ENCODE measurements at regions of chr15 and their contacts with region 1.

Region 1: GRCh38 chr15:93030430-93031105 is 58.4 kb downstream of the RGMA start:
- DNase-seq: peak; percentile 90
- H3K4me3 ChIP-seq: no peak overlapping the region
- H3K27ac ChIP-seq: peak overlapping the region; percentile 84 to 91 (median 88)
- H3K4me1 ChIP-seq: peaks cover 0 to 75% (median 68%) of the 10 kb centered on the region in 4 donors
- H3K27me3 ChIP-seq: no peaks in the 10 kb centered on the region
- CTCF ChIP-seq: peak; percentile 83 to 92 (median 89)
- EP300 ChIP-seq: no peak
- POLR2A ChIP-seq: no peak

Region 2: GRCh38 chr15:93072411-93073394 is 42.1 kb after region 1 on chr15:
- intact Hi-C with region 1: loop called (anchors 2 kb)
- DNase-seq: peak; percentile 94
- H3K4me3 ChIP-seq: peak overlapping the region; percentile 85 to 99 (median 88)
- H3K27ac ChIP-seq: peak overlapping the region; percentile 96 to 98 (median 97)
- H3K4me1 ChIP-seq: peaks cover 0 to 77% (median 59%) of the 10 kb centered on the region in 4 donors
- H3K27me3 ChIP-seq: no peaks in the 10 kb centered on the region
- CTCF ChIP-seq: no peak
- EP300 ChIP-seq: no peak
- POLR2A ChIP-seq: peak; percentile 33 to 41

Region 3: DNA sequence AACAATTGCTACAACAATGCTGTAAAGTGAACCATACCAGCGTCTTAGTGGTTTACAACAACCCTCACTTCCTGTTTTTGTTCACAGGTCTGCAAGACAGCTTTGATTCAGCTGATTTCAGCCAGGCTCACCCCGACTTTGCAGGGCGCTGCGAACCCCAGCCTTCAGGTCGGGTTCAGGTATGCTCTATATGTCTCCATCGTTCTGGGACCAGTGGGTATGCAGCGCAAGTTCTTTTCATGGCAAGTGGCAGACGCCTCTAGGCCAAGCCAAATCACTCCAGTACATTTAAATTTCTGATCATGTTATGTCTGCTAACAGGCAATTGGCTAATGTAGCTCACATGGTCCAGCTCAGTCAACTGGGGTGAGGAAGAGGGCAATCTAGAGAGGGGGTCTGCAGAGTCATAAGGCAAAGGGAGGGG is 110.8 kb after region 1 on chr15:
- intact Hi-C with region 1: loop called (anchors 10 kb)
- DNase-seq: no peak
- H3K4me3 ChIP-seq: no peak overlapping the region
- H3K27ac ChIP-seq: no peak overlapping the region
- H3K4me1 ChIP-seq: peaks cover 0 to 20% (median 16%) of the 10 kb centered on the region in 4 donors
- H3K27me3 ChIP-seq: no peaks in the 10 kb centered on the region
- CTCF ChIP-seq: no peak
- EP300 ChIP-seq: no peak
- POLR2A ChIP-seq: no peak

Region 4: GRCh38 chr15:93378558-93378957 is 348.0 kb after region 1 on chr15:
- intact Hi-C with region 1: no loop called
- DNase-seq: peak; percentile 88
- H3K4me3 ChIP-seq: no peak overlapping the region
- H3K27ac ChIP-seq: peak overlapping the region in 3 of 4 donors; percentile 8 to 63 (median 55)
- H3K4me1 ChIP-seq: peaks cover 0 to 12% (median 7%) of the 10 kb centered on the region in 4 donors
- H3K27me3 ChIP-seq: no peaks in the 10 kb centered on the region
- CTCF ChIP-seq: no peak
- EP300 ChIP-seq: no peak
- POLR2A ChIP-seq: no peak

Region 5: DNA sequence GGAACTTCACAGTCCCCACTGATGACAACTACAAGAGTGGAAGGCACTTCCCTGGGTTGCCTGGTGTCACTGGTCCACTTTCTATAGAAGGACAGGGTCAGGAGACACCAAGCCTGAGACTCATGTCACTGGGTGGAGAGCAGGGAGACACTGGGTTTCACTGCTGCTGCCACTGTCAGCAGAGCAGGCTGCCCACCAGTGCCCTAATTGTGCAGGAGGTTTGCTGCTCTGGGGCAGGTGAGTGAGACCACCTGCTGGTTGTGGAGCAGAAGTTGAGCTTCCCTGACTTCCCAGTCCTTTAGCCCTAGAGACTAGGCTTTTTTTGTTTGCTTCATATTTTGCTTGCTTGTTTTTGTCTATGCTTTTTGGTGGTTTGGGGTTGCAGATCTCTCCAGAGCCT is 586.9 kb after region 1 on chr15:
- intact Hi-C with region 1: loop called (anchors 10 kb)
- DNase-seq: no peak
- H3K4me3 ChIP-seq: no peak overlapping the region
- H3K27ac ChIP-seq: no peak overlapping the region
- H3K4me1 ChIP-seq: no peaks in the 10 kb centered on the region
- H3K27me3 ChIP-seq: no peaks in the 10 kb centered on the region
- CTCF ChIP-seq: no peak
- EP300 ChIP-seq: no peak
- POLR2A ChIP-seq: no peak

Region 6: DNA sequence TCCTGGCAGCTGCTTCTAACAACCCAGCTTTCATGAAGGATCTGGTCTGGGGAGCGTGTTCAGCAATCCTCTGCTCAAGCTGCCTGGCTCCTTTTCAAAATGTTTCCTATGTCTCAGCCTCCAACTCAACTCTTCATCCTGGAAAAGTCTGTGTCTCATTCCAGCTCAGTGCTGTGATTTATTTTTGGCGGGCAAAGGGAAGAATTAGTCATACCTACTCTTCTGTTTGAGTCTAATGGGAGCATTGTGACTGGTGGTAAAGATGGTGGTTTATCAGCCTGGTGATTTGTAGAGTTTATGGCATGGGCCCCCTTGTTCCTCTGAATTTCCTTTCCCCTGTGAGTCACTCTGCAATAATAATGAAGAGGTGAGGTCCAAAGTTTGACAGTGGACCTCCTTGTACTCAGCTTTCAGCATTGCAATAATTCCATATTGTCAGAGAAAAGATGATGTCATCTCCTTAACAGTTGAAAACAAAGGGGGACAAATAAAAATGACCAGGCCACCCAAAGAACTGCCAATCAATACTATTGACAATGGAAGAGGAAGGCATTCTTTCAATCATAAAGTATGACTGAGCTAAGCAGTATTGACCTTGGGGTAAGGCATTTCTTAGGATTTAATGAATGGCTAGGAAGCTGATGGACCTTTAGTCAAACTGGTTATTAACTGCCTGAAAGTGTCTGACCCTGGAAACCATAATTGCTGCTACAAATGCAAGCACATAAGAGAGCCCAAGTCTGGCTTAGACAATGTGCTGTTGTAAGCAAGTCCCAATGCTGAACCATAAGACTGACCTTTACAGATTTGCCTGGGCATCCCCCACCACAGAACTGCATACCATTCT is 996.1 kb after region 1 on chr15:
- intact Hi-C with region 1: loop called (anchors 10 kb)
- DNase-seq: peak; percentile 79
- H3K4me3 ChIP-seq: no peak overlapping the region
- H3K27ac ChIP-seq: peak overlapping the region; percentile 63 to 80 (median 76)
- H3K4me1 ChIP-seq: peaks cover 0 to 95% (median 78%) of the 10 kb centered on the region in 4 donors
- H3K27me3 ChIP-seq: no peaks in the 10 kb centered on the region
- CTCF ChIP-seq: no peak
- EP300 ChIP-seq: peak in 3 of 4 donors; percentile 22 to 60 (median 33)
- POLR2A ChIP-seq: no peak

Measured in sigmoid colon (tissue), 7 donors.